IMR-90 (cell line): ENCODE measurements at regions of chr5 and their contacts with region 1.

Region 1: DNA sequence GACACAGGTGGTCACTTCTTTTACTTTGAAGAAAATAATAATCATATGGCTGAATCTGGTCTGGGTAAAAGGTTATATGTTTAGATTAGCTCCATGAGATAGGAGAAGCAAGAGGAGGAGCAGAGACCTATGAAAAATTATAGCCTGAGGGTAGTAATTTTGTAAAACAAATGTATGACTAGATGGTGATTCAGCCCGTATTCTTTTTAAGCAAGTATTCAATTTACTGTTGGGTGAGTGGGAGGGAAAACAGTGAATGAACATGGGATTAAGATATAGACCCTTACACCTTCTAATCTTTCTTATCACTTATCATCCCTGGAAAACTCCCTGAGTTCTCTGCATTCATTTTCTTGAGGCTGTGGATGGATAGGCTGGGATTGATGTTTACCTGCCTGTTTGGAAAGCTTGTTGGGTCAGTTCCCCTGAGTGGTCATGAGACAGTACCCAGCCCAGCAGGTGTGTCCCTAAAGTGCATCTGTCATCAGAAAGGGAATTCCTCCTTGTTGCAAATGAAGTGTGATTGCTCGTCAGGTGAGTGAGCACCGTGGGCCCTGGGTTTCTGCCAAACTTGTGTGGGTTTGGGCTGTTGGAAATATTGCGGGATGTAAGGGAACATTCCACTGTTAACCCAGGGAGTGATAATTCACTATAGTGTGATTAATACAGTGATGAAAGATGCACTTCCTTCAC is 101.2 kb upstream of the GDNF start:
- DNase-seq: no peak
- ATAC-seq: no peak
- H3K4me3 ChIP-seq: no peak overlapping the region
- H3K27ac ChIP-seq: no peak overlapping the region
- H3K4me1 ChIP-seq: no peaks in the 10 kb centered on the region
- H3K27me3 ChIP-seq: peaks cover 12% of the 10 kb centered on the region
- CTCF ChIP-seq: no peak
- POLR2A ChIP-seq: no peak
- RAD21 ChIP-seq: no peak

Region 2: DNA sequence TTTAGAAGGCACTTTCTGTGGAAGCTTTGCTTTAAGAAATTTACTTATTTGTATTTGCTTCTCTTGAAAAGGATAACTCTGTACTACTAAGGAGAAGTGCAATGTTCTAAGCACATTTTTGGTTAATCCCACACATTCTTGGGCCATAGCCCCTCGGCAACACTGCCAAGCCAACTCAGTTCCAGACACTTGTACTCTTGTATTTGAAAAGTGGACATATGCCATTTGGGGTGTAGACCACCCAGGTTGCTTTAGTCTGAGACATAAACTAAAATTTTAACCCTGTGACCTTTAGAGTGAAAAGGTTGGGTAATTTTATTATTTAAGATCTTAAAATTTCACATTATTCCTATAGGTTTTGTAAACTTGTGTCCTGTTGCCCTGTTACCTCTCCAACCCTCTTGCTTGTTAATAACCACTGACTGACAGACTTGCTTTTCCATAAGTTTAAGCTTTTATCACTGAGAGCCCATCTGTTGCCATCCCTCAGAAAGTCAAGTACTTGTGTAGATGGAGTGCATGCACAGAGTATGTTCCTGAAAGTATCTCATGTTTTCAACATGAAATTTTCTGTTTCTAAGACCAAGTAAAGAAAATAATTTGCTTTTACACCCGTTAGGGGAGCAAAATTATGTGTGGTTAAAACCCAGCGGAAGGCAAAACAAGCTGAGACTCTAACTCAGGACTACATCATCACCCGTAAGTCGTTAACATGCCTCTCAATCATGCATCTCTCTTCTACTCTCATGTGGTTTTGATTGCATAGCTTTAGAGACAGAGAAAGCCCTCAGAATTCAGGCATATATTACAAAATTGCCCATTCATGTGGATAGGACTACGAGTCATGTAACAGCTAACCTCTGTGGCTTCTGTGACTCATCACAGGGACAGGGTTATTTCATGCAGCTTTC is 218.6 kb before region 1 on chr5:
- CTCF ChIA-PET with region 1: no interaction called
- POLR2A ChIA-PET with region 1: no interaction called
- dilution Hi-C with region 1: no loop called
- in situ Hi-C with region 1: no loop called
- intact Hi-C with region 1: no loop called
- DNase-seq: peak; percentile 96
- ATAC-seq: peak; percentile 93
- H3K4me3 ChIP-seq: no peak overlapping the region
- H3K27ac ChIP-seq: no peak overlapping the region
- H3K4me1 ChIP-seq: peaks cover 9% of the 10 kb centered on the region
- H3K27me3 ChIP-seq: no peaks in the 10 kb centered on the region
- CTCF ChIP-seq: no peak
- POLR2A ChIP-seq: no peak
- RAD21 ChIP-seq: peak; percentile 25; the same call in 1 of the 2 replicates

Region 3: GRCh38 chr5:37966291-37966690 is 25.2 kb after region 1 on chr5:
- CTCF ChIA-PET with region 1: no interaction called
- POLR2A ChIA-PET with region 1: no interaction called
- dilution Hi-C with region 1: no loop called
- in situ Hi-C with region 1: no loop called
- intact Hi-C with region 1: loop called (anchors 1 kb)
- DNase-seq: no peak
- ATAC-seq: no peak
- H3K4me3 ChIP-seq: no peak overlapping the region
- H3K27ac ChIP-seq: no peak overlapping the region
- H3K4me1 ChIP-seq: no peaks in the 10 kb centered on the region
- H3K27me3 ChIP-seq: peaks cover 7% of the 10 kb centered on the region
- CTCF ChIP-seq: no peak
- POLR2A ChIP-seq: no peak
- RAD21 ChIP-seq: no peak

Region 4: DNA sequence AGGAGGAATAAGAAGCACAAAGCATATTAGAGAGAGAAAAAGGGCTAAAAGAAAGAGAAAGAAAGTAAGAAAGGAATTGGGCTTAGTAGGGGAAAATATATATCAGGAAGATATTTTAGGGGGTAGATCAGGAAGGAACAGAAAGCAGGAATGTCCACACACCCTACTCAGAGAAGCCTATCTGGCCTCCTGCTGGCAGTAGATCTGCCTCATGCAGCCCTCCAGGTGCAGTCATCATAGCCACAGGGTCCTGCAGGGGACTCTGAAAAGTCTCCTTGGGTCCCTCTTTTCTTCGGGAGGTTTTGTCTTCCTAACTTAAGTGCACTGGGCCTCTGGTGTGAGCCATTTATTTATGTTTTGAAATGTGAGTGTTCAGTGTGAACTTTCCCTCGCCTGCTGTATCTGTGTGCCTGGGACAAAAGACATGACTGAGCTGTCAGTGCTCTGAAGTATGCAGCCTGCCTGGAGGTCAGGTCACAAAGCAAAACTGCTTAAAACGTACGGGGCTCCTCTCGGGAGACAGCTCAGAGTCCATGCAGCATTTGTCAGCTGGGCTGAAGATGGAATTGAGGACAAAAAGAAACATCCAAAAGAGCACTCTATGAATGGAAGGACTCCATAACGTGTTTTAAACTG is 50.3 kb after region 1 on chr5:
- CTCF ChIA-PET with region 1: no interaction called
- POLR2A ChIA-PET with region 1: no interaction called
- dilution Hi-C with region 1: no loop called
- in situ Hi-C with region 1: no loop called
- intact Hi-C with region 1: loop called (anchors 10 kb)
- DNase-seq: no peak
- ATAC-seq: no peak
- H3K4me3 ChIP-seq: no peak overlapping the region
- H3K27ac ChIP-seq: no peak overlapping the region
- H3K4me1 ChIP-seq: no peaks in the 10 kb centered on the region
- H3K27me3 ChIP-seq: peaks cover 8% of the 10 kb centered on the region; the same call in 1 of the 2 replicates
- CTCF ChIP-seq: no peak
- POLR2A ChIP-seq: no peak
- RAD21 ChIP-seq: no peak